GM12878 (cell line): ENCODE measurements at regions of chr3 and their contacts with region 1.

Region 1: DNA sequence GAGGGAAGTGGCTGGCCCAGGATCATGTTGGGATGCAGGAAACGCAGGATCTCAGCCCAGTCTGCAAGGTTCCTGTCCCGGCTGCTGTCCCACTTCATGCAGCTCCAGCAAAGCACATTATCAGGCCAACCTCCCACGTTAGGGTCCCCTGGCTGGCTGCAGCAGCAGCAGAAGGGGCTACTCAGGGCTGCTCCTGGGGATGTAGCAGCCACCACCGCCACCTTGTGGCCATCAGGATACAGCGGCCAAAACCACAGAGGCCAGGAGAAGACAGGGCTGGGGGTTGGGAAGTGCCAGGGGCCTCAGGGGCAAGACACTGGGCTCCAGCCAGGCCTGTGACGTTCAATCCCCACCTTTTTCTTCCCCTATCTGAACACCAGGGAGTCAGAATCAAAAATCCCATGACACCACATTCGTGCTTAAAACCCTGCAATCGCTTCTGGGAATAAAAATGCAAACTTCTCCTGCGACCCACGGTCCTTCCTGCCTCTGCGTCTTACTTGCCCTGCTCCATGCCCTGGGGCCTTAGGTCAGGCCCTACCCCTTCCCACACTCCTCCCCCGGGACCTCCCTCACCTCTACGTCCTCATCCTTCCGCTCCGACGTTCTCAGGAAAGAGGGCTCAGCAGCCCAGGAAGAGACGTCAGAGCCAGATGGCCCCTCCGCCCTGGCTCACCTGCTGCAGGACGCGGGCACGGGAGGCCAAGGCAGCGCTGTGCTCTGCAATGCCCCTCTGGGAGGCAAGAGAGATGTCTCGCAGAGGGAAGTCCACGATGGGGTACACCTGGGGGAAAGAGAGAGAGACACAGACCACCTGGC is 21.5 kb downstream of the SSUH2 start:
- DNase-seq: no peak
- ATAC-seq: peak; percentile 98
- H3K4me3 ChIP-seq: no peak overlapping the region
- H3K27ac ChIP-seq: no peak overlapping the region
- H3K4me1 ChIP-seq: no peaks in the 10 kb centered on the region
- H3K27me3 ChIP-seq: no peaks in the 10 kb centered on the region
- CTCF ChIP-seq: peak; percentile 74 to 91 (median 90)
- EP300 ChIP-seq: no peak
- POLR2A ChIP-seq: no peak
- RAD21 ChIP-seq: peak; percentile 89

Region 2: GRCh38 chr3:8324740-8325139 is 298.3 kb before region 1 on chr3:
- CTCF ChIA-PET with region 1: interaction called, 4 read pairs
- POLR2A ChIA-PET with region 1: no interaction called
- RAD21 ChIA-PET with region 1: no interaction called
- SMC1A ChIA-PET with region 1: no interaction called
- in situ Hi-C with region 1: no loop called
- intact Hi-C with region 1: loop called (anchors 10 kb)
- DNase-seq: no peak
- ATAC-seq: peak; percentile 92
- H3K4me3 ChIP-seq: no peak overlapping the region
- H3K27ac ChIP-seq: no peak overlapping the region
- H3K4me1 ChIP-seq: no peaks in the 10 kb centered on the region
- H3K27me3 ChIP-seq: no peaks in the 10 kb centered on the region
- CTCF ChIP-seq: peak; percentile 37 to 64 (median 53); a peak in 4 of 6 replicates
- EP300 ChIP-seq: no peak
- POLR2A ChIP-seq: no peak
- RAD21 ChIP-seq: peak; percentile 34; the same call in 1 of the 2 replicates

Region 3: GRCh38 chr3:8441969-8442559 is 181.0 kb before region 1 on chr3:
- CTCF ChIA-PET with region 1: interaction called, 24 read pairs
- POLR2A ChIA-PET with region 1: no interaction called
- RAD21 ChIA-PET with region 1: interaction called, 10 read pairs
- SMC1A ChIA-PET with region 1: interaction called, 20 read pairs
- in situ Hi-C with region 1: loop called (anchors 5 kb)
- intact Hi-C with region 1: loop called (anchors 1 kb)
- DNase-seq: no peak
- ATAC-seq: peak; percentile 63
- H3K4me3 ChIP-seq: no peak overlapping the region
- H3K27ac ChIP-seq: no peak overlapping the region
- H3K4me1 ChIP-seq: no peaks in the 10 kb centered on the region
- H3K27me3 ChIP-seq: no peaks in the 10 kb centered on the region; a peak in 1 of 4 replicates
- CTCF ChIP-seq: peak; percentile 53 to 64 (median 64)
- EP300 ChIP-seq: no peak
- POLR2A ChIP-seq: no peak
- RAD21 ChIP-seq: peak; percentile 62

Region 4: GRCh38 chr3:8497582-8497981 is 125.5 kb before region 1 on chr3:
- CTCF ChIA-PET with region 1: no interaction called
- POLR2A ChIA-PET with region 1: no interaction called
- RAD21 ChIA-PET with region 1: no interaction called
- SMC1A ChIA-PET with region 1: no interaction called
- in situ Hi-C with region 1: no loop called
- intact Hi-C with region 1: no loop called
- DNase-seq: no peak
- ATAC-seq: no peak
- H3K4me3 ChIP-seq: no peak overlapping the region
- H3K27ac ChIP-seq: no peak overlapping the region
- H3K4me1 ChIP-seq: peaks cover 2% of the 10 kb centered on the region; the same call in 1 of the 2 replicates
- H3K27me3 ChIP-seq: peaks cover 0 to 2% of the 10 kb centered on the region in 2 experiments; a peak in 1 of 4 replicates
- CTCF ChIP-seq: no peak
- EP300 ChIP-seq: no peak
- POLR2A ChIP-seq: no peak
- RAD21 ChIP-seq: no peak

Region 5: DNA sequence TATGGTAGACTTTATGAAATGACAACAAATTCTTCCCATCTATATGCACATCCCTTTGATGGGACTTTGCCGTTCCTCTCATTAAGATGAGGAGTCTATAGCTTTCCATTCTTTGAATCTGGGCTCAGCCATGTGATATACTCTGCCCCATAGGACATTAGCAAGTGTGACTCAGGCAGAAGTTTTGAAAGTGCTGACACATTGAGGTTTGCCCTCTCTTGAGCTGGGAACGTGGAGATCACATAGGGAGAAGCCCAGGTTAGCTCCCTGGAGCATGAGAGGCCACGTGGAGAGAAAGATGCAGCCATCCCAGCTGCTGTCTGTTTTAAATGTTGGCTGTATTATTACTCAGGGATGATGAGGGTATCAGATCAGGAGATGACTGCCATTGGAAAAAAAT is 214.1 kb after region 1 on chr3:
- CTCF ChIA-PET with region 1: no interaction called
- POLR2A ChIA-PET with region 1: no interaction called
- RAD21 ChIA-PET with region 1: no interaction called
- SMC1A ChIA-PET with region 1: no interaction called
- in situ Hi-C with region 1: no loop called
- intact Hi-C with region 1: no loop called
- DNase-seq: no peak
- ATAC-seq: no peak
- H3K4me3 ChIP-seq: no peak overlapping the region
- H3K27ac ChIP-seq: no peak overlapping the region
- H3K4me1 ChIP-seq: no peaks in the 10 kb centered on the region
- H3K27me3 ChIP-seq: no peaks in the 10 kb centered on the region
- CTCF ChIP-seq: no peak
- EP300 ChIP-seq: no peak
- POLR2A ChIP-seq: no peak
- RAD21 ChIP-seq: no peak